ENCODE measurements at regions of chr15 and their contacts with region 1.

Region 1: GRCh38 chr15:70488002-70488605 is 275.3 kb downstream of the UACA start:
- DNase-seq: no peak
- H3K4me3 ChIP-seq: no peak overlapping the region
- CTCF ChIP-seq: peak; percentile 92

Region 2: GRCh38 chr15:69523010-69524001 is 964.8 kb before region 1 on chr15:
- CTCF ChIA-PET with region 1: interaction called, 19 read pairs
- POLR2A ChIA-PET with region 1: no interaction called
- DNase-seq: peak; percentile 23
- H3K4me3 ChIP-seq: no peak overlapping the region
- CTCF ChIP-seq: peak; percentile 85

Region 3: GRCh38 chr15:70466895-70467529 is 21.1 kb before region 1 on chr15:
- CTCF ChIA-PET with region 1: interaction called, 58 read pairs
- POLR2A ChIA-PET with region 1: no interaction called
- DNase-seq: no peak
- H3K4me3 ChIP-seq: no peak overlapping the region
- CTCF ChIP-seq: peak; percentile 86

Region 4: GRCh38 chr15:70504299-70504951 is 16.3 kb after region 1 on chr15:
- CTCF ChIA-PET with region 1: interaction called, 37 read pairs
- POLR2A ChIA-PET with region 1: no interaction called
- DNase-seq: no peak
- H3K4me3 ChIP-seq: no peak overlapping the region
- CTCF ChIP-seq: no peak